ENCODE measurements at regions of chr5 and their contacts with region 1.

Region 1: GRCh38 chr5:175478384-175479124 is at the start of gene SFXN1:
- DNase-seq: peak; percentile 51 to 81 (median 73)
- H3K4me3 ChIP-seq: peak within 1 kb of the TSS; percentile 81
- H3K4me3 Mint-ChIP-seq: peak within 1 kb of the TSS; percentile 93 to 97 (median 97)
- H3K27ac ChIP-seq: peak within 1 kb of the TSS; percentile 73
- H3K27ac Mint-ChIP-seq: peak within 1 kb of the TSS; percentile 77 to 95 (median 93)
- H3K4me1 ChIP-seq: peaks cover 43% of the 10 kb centered on the region
- H3K4me1 Mint-ChIP-seq: peaks cover 40 to 55% (median 53%) of the 10 kb centered on the region in 3 donors
- H3K27me3 ChIP-seq: no peaks in the 10 kb centered on the region
- H3K27me3 Mint-ChIP-seq: peaks cover 0 to 8% of the 10 kb centered on the region in 2 donors
- total RNA-seq, gene SFXN1: 359 to 366 TPM

Region 2: DNA sequence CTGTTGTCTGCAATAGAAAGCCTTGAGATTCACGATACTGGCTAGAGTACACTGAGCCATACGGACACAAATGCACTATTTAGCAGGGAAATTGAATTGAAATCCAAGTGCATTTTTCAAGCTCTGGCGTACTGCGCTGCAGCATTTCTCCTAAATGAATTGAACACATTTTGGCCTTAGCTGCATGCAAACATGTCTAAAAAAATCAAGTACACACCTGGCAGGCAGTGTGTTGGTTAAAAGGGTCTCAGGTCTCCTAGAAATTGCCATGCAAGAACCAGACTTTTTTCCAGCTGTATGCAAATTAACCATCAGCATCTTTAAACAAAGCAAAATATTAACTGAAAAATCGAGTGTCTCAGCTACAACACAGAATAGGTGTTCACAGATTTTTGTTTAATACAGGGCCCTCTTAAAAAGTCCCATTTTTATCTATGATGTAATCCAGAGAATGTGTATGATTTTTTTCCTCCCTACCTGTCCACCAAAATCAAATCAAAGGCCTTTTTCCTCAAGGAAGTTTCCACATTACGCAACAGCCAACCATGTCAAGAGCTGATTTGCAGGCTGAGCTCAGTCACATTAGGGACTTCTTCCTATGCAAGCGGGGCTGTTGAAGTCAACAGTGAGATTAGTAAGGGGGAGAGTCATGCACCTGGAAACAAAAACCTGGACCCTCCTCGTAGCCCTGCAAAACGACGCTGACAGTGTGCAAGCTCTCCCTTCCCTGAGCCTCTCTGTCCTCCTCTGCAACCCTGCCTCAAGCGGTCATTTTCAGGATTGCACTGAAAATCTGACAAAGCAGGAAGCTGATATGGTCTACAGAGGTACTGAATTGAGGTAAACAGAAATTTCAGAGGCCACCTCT is 14.2 kb before region 1 on chr5:
- CTCF ChIA-PET with region 1: interaction called, 33 read pairs
- POLR2A ChIA-PET with region 1: interaction called, 8 read pairs
- DNase-seq: peak in 4 of 5 donors; percentile 16 to 66 (median 44)
- H3K4me3 ChIP-seq: no peak overlapping the region
- H3K4me3 Mint-ChIP-seq: peak overlapping the region in 1 of 7 donors; percentile 57
- H3K27ac ChIP-seq: no peak overlapping the region
- H3K27ac Mint-ChIP-seq: peak overlapping the region in 4 of 8 donors; percentile 15 to 94 (median 18)
- H3K4me1 ChIP-seq: peaks cover 5% of the 10 kb centered on the region
- H3K4me1 Mint-ChIP-seq: peaks cover 5 to 10% (median 9%) of the 10 kb centered on the region in 3 donors
- H3K27me3 ChIP-seq: no peaks in the 10 kb centered on the region
- H3K27me3 Mint-ChIP-seq: peaks cover 0 to 6% of the 10 kb centered on the region in 2 donors

Measured in CD8-positive, alpha-beta memory T cell (primary cell).